PC-3 (cell line): ENCODE measurements at regions of chr4 and their contacts with region 1.

Region 1: GRCh38 chr4:166277401-166277800 is 404.4 kb downstream of the TLL1 start:
- DNase-seq: peak; percentile 61
- ATAC-seq: no peak; the same call in 1 of the 2 replicates
- H3K4me3 ChIP-seq: no peak overlapping the region
- H3K27ac ChIP-seq: peak overlapping the region; percentile 33
- H3K4me1 ChIP-seq: peaks cover 32% of the 10 kb centered on the region
- H3K27me3 ChIP-seq: no peaks in the 10 kb centered on the region
- CTCF ChIP-seq: no peak

Region 2: GRCh38 chr4:166400270-166400894 is 123.0 kb after region 1 on chr4:
- CTCF ChIA-PET with region 1: no interaction called
- POLR2A ChIA-PET with region 1: no interaction called
- intact Hi-C with region 1: loop called (anchors 5 kb)
- DNase-seq: peak; percentile 10
- ATAC-seq: peak; percentile 88
- H3K4me3 ChIP-seq: peak overlapping the region; percentile 33; the same call in 1 of the 2 replicates
- H3K27ac ChIP-seq: peak overlapping the region; percentile 33
- H3K4me1 ChIP-seq: peaks cover 8% of the 10 kb centered on the region; the same call in 1 of the 2 replicates
- H3K27me3 ChIP-seq: no peaks in the 10 kb centered on the region
- CTCF ChIP-seq: no peak